CD4-positive, alpha-beta memory T cell (primary cell): ENCODE measurements at regions of chr6 and their contacts with region 1.

Region 1: DNA sequence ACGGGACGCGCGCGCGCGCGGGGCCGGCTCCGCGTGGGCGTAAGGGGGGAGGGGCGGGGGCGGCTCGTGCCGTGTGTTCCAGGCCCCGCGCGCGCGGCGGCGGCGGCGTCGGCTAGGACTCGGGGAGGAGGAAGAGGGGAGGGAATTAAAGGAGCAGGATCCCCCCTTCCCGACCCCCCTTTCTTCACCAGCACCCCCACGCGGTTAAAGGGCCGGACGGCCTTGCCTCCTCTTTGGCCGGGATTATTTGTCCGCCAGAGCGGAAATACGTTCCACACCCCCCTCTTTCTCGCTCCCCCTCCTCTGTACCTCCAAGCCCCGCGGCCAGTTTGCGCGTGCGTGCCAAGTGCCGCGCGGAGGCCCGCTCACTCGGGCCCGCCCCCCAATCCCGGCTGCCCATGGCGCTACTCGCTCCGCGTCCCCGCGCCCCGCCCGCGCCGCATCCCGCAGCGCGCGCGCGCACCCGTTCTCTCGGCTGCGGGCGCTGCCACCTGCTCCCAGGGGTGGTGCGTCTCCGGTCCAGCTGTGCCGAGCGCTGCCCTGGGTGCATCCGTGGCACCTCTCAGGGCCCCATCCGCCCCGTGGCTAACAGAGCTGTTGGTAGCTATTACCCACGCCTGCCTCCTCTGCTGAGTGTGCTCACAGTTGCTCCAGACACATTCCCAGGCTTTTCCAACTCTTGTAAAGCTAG is at the start of gene ZBTB12:
- DNase-seq: peak; percentile 83 to 87 (median 86)
- H3K4me3 ChIP-seq: peak within 1 kb of the TSS; percentile 49 to 78
- H3K4me3 Mint-ChIP-seq: peak within 1 kb of the TSS; percentile 78 to 92 (median 90)
- H3K27ac ChIP-seq: peak within 1 kb of the TSS; percentile 58
- H3K27ac Mint-ChIP-seq: peak within 1 kb of the TSS; percentile 71 to 95 (median 89)
- H3K4me1 ChIP-seq: peaks cover 30% of the 10 kb centered on the region
- H3K4me1 Mint-ChIP-seq: peaks cover 17 to 36% (median 27%) of the 10 kb centered on the region in 4 donors
- H3K27me3 ChIP-seq: no peaks in the 10 kb centered on the region
- H3K27me3 Mint-ChIP-seq: peaks cover 0 to 1% of the 10 kb centered on the region in 2 donors
- total RNA-seq, gene ZBTB12: 2.4 to 2.5 TPM

Region 2: DNA sequence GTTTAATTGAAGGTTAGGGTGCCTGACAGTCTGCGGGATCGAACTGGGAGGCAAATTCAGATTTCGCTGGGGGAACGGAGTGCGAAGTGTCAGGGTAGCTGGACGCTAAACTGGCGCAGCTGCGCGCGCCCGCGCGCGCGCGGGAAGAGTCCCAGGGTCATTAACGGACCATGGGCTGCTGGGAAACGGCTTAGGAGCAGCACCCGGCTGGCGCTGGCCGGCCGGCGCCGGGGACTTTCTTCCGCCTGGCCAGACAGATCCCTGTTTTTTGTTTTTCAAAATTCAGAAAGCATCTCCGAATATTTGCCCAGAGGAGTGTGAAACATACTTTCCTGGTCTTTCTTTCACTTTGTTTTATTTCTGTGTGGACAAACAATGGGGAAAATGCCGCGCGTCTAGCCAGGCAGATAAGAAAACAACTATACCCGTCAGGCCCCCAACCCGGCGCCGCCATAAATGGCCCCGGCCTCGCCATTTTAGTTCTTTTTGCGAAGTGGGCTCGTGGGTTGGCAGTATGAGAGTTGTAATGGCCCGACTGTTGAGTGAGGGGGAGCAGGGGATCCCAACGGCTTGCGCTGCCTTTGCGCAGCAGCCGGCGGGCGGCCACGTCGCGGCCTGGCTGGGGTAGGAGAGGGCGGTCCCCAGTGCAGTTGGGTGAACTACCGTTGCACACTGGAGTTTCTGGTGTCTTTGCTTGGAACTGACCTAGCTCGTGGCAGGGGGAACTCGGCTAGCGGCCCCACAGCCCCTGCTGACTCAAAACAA is 67.5 kb before region 1 on chr6:
- CTCF ChIA-PET with region 1: no interaction called
- POLR2A ChIA-PET with region 1: interaction called, 12 read pairs
- intact Hi-C with region 1: loop called (anchors 2 kb)
- DNase-seq: peak; percentile 80 to 84 (median 81)
- H3K4me3 ChIP-seq: peak overlapping the region; percentile 75 to 88
- H3K4me3 Mint-ChIP-seq: peak overlapping the region; percentile 88 to 99 (median 96)
- H3K27ac ChIP-seq: peak overlapping the region; percentile 88
- H3K27ac Mint-ChIP-seq: peak overlapping the region; percentile 97 to 99 (median 99)
- H3K4me1 ChIP-seq: peaks cover 61% of the 10 kb centered on the region
- H3K4me1 Mint-ChIP-seq: peaks cover 27 to 65% (median 48%) of the 10 kb centered on the region in 4 donors
- H3K27me3 ChIP-seq: no peaks in the 10 kb centered on the region
- H3K27me3 Mint-ChIP-seq: no peaks in the 10 kb centered on the region

Region 3: DNA sequence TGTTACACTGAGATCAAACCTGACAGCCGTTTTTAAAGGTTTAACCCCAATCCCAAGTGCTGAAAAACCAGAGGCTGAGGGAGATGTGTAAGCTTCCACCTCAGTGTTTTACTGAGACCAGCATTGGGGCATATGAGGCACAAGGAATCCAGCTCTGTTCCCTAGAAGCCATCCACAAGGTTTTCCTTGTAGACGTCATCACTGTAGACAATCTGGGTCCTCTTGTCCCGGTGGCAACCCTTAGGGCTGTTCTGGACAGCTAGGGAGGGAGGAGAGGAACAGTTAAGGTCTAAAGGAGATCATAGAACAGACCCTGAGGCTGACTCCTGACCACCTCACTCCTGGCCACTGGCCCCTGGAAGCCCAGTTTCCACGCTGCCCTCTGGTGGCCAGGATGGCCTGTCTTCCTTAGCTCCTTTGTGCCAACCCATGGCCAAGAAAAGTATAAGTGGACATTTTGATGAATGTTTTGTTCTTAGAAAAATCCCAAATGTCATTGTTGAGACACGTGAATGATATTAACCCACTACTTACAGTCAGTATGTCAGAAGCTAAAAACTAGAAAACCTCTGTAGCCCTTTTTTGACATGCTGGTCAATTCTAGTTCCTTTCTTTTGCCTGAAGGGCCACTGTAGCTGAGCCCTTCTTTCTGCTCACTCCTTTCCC is 50.2 kb after region 1 on chr6:
- CTCF ChIA-PET with region 1: interaction called, 5 read pairs
- POLR2A ChIA-PET with region 1: interaction called, 13 read pairs
- intact Hi-C with region 1: no loop called
- DNase-seq: peak in 1 of 5 donors; percentile 19
- H3K4me3 ChIP-seq: no peak overlapping the region
- H3K4me3 Mint-ChIP-seq: no peak overlapping the region
- H3K27ac ChIP-seq: no peak overlapping the region
- H3K27ac Mint-ChIP-seq: peak overlapping the region in 4 of 7 donors; percentile 46 to 82 (median 60)
- H3K4me1 ChIP-seq: peaks cover 4% of the 10 kb centered on the region
- H3K4me1 Mint-ChIP-seq: peaks cover 0 to 3% (median under 1%) of the 10 kb centered on the region in 4 donors
- H3K27me3 ChIP-seq: no peaks in the 10 kb centered on the region
- H3K27me3 Mint-ChIP-seq: no peaks in the 10 kb centered on the region

Region 4: GRCh38 chr6:31958741-31959739 is 56.9 kb after region 1 on chr6 and contains the starts of genes NELFE and SKIC2:
- CTCF ChIA-PET with region 1: interaction called, 6 read pairs
- POLR2A ChIA-PET with region 1: interaction called, 4 read pairs
- intact Hi-C with region 1: loop called (anchors 1 kb)
- DNase-seq: peak; percentile 98 to 99 (median 99)
- H3K4me3 ChIP-seq: peak within 1 kb of the TSS; percentile 95
- H3K4me3 Mint-ChIP-seq: peak within 1 kb of the TSS; percentile 92 to 98 (median 96)
- H3K27ac ChIP-seq: peak within 1 kb of the TSS; percentile 98
- H3K27ac Mint-ChIP-seq: peak within 1 kb of the TSS; percentile 97 to 99 (median 98)
- H3K4me1 ChIP-seq: peaks cover 35% of the 10 kb centered on the region
- H3K4me1 Mint-ChIP-seq: peaks cover 21 to 43% (median 32%) of the 10 kb centered on the region in 4 donors
- H3K27me3 ChIP-seq: no peaks in the 10 kb centered on the region
- H3K27me3 Mint-ChIP-seq: no peaks in the 10 kb centered on the region
- total RNA-seq, gene NELFE: 45.8 to 49.0 TPM
- total RNA-seq, gene SKIC2: 117 to 119 TPM

Region 5: GRCh38 chr6:31971993-31972708 is 70.1 kb after region 1 on chr6 and contains the start of gene DXO:
- CTCF ChIA-PET with region 1: no interaction called
- POLR2A ChIA-PET with region 1: interaction called, 21 read pairs
- intact Hi-C with region 1: no loop called
- DNase-seq: peak; percentile 99 to 100 (median 99)
- H3K4me3 ChIP-seq: peak within 1 kb of the TSS; percentile 63 to 77
- H3K4me3 Mint-ChIP-seq: peak within 1 kb of the TSS; percentile 97 to 99 (median 98)
- H3K27ac ChIP-seq: peak within 1 kb of the TSS; percentile 99
- H3K27ac Mint-ChIP-seq: peak within 1 kb of the TSS; percentile 100
- H3K4me1 ChIP-seq: peaks cover 31% of the 10 kb centered on the region
- H3K4me1 Mint-ChIP-seq: peaks cover 21 to 58% (median 32%) of the 10 kb centered on the region in 4 donors
- H3K27me3 ChIP-seq: no peaks in the 10 kb centered on the region
- H3K27me3 Mint-ChIP-seq: no peaks in the 10 kb centered on the region
- total RNA-seq, gene DXO: 27.8 to 30.3 TPM

Region 6: GRCh38 chr6:32177788-32178546 is 275.9 kb after region 1 on chr6 and contains the start of gene RNF5:
- CTCF ChIA-PET with region 1: no interaction called
- POLR2A ChIA-PET with region 1: interaction called, 4 read pairs
- intact Hi-C with region 1: loop called (anchors 5 kb)
- DNase-seq: peak; percentile 96 to 99 (median 98)
- H3K4me3 ChIP-seq: peak within 1 kb of the TSS; percentile 74 to 87
- H3K4me3 Mint-ChIP-seq: peak within 1 kb of the TSS; percentile 92 to 100 (median 96)
- H3K27ac ChIP-seq: peak within 1 kb of the TSS; percentile 91
- H3K27ac Mint-ChIP-seq: peak within 1 kb of the TSS; percentile 97 to 100 (median 99)
- H3K4me1 ChIP-seq: peaks cover 79% of the 10 kb centered on the region
- H3K4me1 Mint-ChIP-seq: peaks cover 50 to 84% (median 66%) of the 10 kb centered on the region in 4 donors
- H3K27me3 ChIP-seq: no peaks in the 10 kb centered on the region
- H3K27me3 Mint-ChIP-seq: no peaks in the 10 kb centered on the region
- total RNA-seq, gene RNF5: 44.2 to 47.7 TPM